ENCODE measurements at regions of chr3 and their contacts with region 1.

Region 1: DNA sequence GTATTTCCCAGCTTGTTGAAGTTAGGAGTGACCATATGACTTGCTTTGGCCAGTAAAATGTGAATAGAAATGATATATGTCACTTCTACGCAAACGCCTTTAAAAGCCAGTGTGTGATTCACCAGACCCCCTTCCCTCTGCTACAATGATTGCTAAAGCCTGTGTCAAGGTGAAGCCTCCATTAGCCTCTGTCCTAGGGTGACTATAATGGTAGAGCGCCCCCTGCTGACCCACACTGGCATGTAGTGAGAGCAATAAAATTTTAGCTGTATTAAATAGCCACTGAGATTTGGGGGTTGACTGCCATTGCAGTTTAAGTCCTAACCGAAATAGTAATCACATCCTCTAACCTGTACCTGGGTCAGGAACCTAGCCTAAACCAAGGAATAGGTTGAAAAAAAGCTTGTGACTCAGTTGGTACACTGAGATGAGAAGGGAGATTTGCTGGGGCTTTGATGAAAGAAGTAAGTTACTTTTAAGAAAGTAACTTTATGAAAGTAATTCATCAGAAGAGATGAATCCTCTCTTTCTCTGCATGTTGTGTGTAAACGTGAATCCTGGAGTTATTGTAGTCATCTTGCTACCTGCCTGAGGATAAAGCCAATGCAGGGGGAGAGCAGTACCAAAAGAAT is 52.6 kb downstream of the GTF2E1 start:
- DNase-seq: peak; percentile 86
- H3K4me3 Mint-ChIP-seq: no peak overlapping the region
- H3K27ac Mint-ChIP-seq: no peak overlapping the region
- H3K4me1 Mint-ChIP-seq: no peaks in the 10 kb centered on the region
- H3K27me3 Mint-ChIP-seq: no peaks in the 10 kb centered on the region
- CTCF ChIP-seq: peak; percentile 76

Region 2: GRCh38 chr3:120239644-120240043 is 555.5 kb before region 1 on chr3:
- CTCF ChIA-PET with region 1: no interaction called
- intact Hi-C with region 1: loop called (anchors 5 kb)
- DNase-seq: no peak
- H3K4me3 Mint-ChIP-seq: no peak overlapping the region
- H3K27ac Mint-ChIP-seq: no peak overlapping the region
- H3K4me1 Mint-ChIP-seq: no peaks in the 10 kb centered on the region
- H3K27me3 Mint-ChIP-seq: peaks cover 57% of the 10 kb centered on the region
- CTCF ChIP-seq: no peak

Region 3: GRCh38 chr3:120558771-120559241 is 236.3 kb before region 1 on chr3:
- CTCF ChIA-PET with region 1: interaction called, 8 read pairs
- intact Hi-C with region 1: loop called (anchors 1 kb)
- DNase-seq: peak; percentile 86
- H3K4me3 Mint-ChIP-seq: peak overlapping the region; percentile 75
- H3K27ac Mint-ChIP-seq: peak overlapping the region; percentile 91
- H3K4me1 Mint-ChIP-seq: peaks cover 20% of the 10 kb centered on the region
- H3K27me3 Mint-ChIP-seq: no peaks in the 10 kb centered on the region
- CTCF ChIP-seq: peak; percentile 90

Region 4: GRCh38 chr3:120567370-120568201 is 227.5 kb before region 1 on chr3:
- CTCF ChIA-PET with region 1: interaction called, 10 read pairs
- intact Hi-C with region 1: no loop called
- DNase-seq: peak; percentile 19
- H3K4me3 Mint-ChIP-seq: no peak overlapping the region
- H3K27ac Mint-ChIP-seq: no peak overlapping the region
- H3K4me1 Mint-ChIP-seq: no peaks in the 10 kb centered on the region
- H3K27me3 Mint-ChIP-seq: no peaks in the 10 kb centered on the region
- CTCF ChIP-seq: no peak

Region 5: DNA sequence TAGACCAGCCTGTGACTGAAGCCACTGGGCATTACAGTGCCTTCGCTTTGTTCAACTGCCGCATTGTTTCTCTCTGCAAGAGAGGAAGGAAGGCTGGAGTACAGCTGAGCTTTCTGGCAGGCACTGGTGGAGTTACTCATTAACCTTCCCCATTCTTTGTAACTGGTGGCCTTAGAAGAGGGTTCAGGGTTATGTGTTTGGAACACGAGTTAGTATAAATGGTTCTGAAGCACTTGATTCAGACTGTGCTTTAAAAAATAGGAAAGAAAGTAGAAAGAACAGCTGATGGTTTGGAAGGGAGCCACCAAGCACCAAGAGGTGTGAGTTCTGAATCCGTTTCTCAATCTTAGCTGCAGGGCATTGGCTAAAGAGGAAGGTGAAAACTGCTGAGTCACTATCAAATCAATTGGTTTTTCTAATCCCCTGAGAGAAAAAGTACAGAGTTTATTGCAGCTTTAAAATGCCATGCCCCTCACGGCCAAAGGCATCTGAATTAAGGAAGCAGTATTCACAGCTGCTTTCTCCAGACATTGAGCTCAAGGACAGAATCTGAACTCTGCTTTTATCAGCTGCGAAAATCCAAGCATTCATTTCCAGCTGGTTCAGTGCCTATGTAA is 116.7 kb before region 1 on chr3:
- CTCF ChIA-PET with region 1: interaction called, 4 read pairs
- intact Hi-C with region 1: loop called (anchors 5 kb)
- DNase-seq: peak; percentile 70
- H3K4me3 Mint-ChIP-seq: peak overlapping the region; percentile 66
- H3K27ac Mint-ChIP-seq: peak overlapping the region; percentile 82
- H3K4me1 Mint-ChIP-seq: peaks cover 56% of the 10 kb centered on the region
- H3K27me3 Mint-ChIP-seq: no peaks in the 10 kb centered on the region
- CTCF ChIP-seq: no peak